ENCODE measurements at regions of chr5 and their contacts with region 1.

Region 1: DNA sequence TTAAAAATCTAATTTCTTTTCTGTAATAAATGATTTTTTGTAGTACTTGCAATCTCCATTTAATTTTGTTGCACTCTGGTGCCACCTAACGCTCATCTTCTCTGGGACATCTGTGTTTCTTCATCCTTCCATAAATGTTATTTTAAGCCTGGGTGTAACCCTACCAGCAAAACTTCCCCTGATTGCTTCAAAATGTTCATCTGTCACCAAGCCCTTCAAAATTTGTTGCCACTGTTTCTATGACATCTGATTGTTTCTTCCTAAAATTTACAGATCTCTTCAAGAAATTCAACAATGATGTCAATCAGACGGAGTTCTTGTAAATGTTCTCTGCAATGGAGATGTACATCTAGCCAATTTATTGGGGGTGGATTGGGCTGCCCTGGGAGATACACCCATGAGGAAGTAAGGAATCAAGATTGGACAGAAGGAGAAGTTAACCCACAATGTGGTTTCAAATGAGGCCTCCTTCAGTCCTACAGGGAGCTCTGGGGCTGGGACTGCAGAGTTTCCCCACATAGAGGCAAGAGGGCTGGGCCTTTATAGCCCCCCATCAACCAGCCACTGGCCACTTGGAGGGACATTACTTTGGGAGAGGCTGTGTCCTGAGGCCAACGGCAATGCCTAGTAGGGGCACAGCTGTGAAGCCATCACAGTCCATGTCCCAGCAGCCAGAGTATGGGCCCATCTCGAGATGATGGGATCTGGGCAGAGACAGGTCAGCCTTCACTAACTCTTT is 23.3 kb downstream of the MCTP1 start:
- DNase-seq: no peak
- ATAC-seq: peak; percentile 69; the same call in 1 of the 2 replicates
- H3K4me3 ChIP-seq: no peak overlapping the region
- H3K27ac ChIP-seq: no peak overlapping the region
- H3K4me1 ChIP-seq: no peaks in the 10 kb centered on the region
- H3K27me3 ChIP-seq: no peaks in the 10 kb centered on the region
- CTCF ChIP-seq: peak; percentile 51 to 56 (median 54); a peak in 4 of 6 replicates
- POLR2A ChIP-seq: no peak
- RAD21 ChIP-seq: peak; percentile 69

Region 2: DNA sequence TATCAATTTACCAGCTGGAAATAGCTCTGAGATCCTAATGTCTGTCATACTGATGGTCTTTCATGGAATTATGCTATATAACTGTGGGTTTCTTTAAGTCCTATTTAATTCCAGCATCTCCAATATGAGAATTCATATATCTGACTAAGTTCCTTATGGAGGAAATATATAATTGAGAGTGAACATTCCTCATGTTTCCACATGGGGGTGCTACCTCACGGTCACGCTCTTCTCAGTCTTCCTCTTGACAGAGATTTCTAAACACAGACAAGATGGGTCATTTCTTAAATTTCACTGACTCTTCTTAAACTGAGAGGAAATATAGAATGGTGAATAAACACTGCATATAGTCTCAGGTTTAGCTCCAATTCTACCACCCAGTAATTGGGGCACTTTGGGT is 431.1 kb before region 1 on chr5:
- CTCF ChIA-PET with region 1: no interaction called
- POLR2A ChIA-PET with region 1: no interaction called
- RAD21 ChIA-PET with region 1: no interaction called
- intact Hi-C with region 1: loop called (anchors 5 kb)
- DNase-seq: peak; percentile 8
- ATAC-seq: peak; percentile 74
- H3K4me3 ChIP-seq: no peak overlapping the region
- H3K27ac ChIP-seq: no peak overlapping the region
- H3K4me1 ChIP-seq: no peaks in the 10 kb centered on the region
- H3K27me3 ChIP-seq: peaks cover 6% of the 10 kb centered on the region; the same call in 1 of the 2 replicates
- CTCF ChIP-seq: peak; percentile 17 to 68 (median 50); a peak in 4 of 6 replicates
- POLR2A ChIP-seq: no peak
- RAD21 ChIP-seq: peak; percentile 34

Region 3: DNA sequence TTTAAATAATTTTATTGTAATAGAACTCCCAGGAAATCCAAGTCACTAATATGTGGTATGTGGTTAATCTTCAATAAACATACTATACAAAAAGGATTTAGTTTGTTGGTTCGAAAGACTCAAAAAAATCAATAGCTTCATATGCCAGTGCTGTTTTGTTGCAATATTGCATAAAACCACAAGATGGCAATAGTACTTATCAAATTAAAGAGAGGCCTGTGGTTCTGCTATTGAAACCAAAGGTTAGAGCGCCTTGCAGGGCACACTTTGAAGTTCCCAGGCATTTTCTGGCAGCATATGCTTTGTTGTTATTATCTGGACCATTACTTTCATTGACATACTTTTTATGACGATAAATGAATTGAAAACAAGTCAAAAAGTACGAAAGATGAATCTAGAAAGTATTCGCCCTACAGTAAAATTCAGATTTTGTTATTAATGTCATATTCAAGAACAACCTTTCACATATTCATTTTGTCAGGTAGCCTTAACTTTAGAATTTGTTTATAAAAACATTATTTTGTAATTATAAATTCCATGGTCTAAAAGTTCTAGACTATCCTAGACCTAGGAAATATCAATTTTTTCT is 293.0 kb before region 1 on chr5:
- CTCF ChIA-PET with region 1: interaction called, 27 read pairs
- POLR2A ChIA-PET with region 1: no interaction called
- RAD21 ChIA-PET with region 1: interaction called in 1 of 2 experiments, 3 read pairs
- intact Hi-C with region 1: loop called (anchors 1 kb)
- DNase-seq: peak; percentile 69
- ATAC-seq: peak; percentile 83
- H3K4me3 ChIP-seq: no peak overlapping the region
- H3K27ac ChIP-seq: no peak overlapping the region
- H3K4me1 ChIP-seq: no peaks in the 10 kb centered on the region; a peak in 1 of 4 replicates
- H3K27me3 ChIP-seq: no peaks in the 10 kb centered on the region
- CTCF ChIP-seq: peak; percentile 64 to 75 (median 73); a peak in 5 of 6 replicates
- POLR2A ChIP-seq: no peak
- RAD21 ChIP-seq: peak; percentile 79

Region 4: GRCh38 chr5:95533106-95533690 is 271.6 kb after region 1 on chr5:
- CTCF ChIA-PET with region 1: no interaction called
- POLR2A ChIA-PET with region 1: no interaction called
- RAD21 ChIA-PET with region 1: no interaction called
- intact Hi-C with region 1: no loop called
- DNase-seq: no peak
- ATAC-seq: no peak
- H3K4me3 ChIP-seq: no peak overlapping the region
- H3K27ac ChIP-seq: no peak overlapping the region
- H3K4me1 ChIP-seq: no peaks in the 10 kb centered on the region
- H3K27me3 ChIP-seq: no peaks in the 10 kb centered on the region
- CTCF ChIP-seq: no peak
- POLR2A ChIP-seq: no peak
- RAD21 ChIP-seq: no peak